ENCODE measurements at regions of chr21 and their contacts with region 1.

Region 1: DNA sequence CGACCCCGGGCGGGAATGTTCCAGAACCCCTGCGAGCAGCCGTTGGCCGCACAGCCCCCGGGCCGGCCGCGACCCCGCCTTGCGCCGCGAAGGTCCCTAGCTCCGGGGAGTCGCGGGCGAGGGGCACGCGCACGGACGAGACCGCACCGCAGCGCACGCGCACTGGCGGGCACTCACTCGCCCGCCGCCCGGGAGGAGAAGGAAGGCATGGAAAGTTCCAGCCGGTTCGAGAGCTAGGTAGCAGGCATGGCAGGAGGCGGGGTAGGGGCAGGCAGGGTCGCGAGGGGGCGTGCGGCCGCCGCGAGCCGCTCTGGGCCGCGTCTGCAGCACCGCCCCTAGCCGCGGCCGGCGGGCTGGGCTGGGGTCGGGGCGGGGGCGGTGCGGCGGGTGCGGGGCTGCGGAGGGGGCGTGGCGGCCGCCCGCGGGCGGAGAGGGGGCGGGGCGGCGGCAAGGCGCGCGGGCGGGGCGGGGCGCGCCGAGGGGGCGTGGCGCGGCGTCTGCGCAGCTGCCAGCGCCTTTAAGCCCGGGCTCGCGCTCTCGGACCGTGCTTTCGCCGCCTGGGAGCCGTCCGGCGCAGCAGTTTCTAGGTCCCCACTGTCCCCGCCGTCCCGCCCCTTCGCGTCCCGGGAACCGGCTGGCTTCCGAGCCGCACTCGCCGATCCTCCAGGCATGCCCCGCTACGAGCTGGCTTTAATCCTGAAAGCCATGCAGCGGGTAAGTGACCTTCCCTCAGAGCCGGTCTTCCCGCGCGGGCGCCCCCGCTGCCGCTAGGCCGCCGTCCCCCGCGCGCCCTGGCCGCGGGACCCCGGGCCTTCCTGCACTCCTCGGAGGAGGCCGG is at the starts of genes MRPS6 and SLC5A3:
- DNase-seq: peak; percentile 83
- ATAC-seq: peak; percentile 82
- H3K4me3 ChIP-seq: peak within 1 kb of the TSS; percentile 78
- H3K27ac ChIP-seq: no peak within 1 kb of the TSS
- H3K4me1 ChIP-seq: peaks cover 41% of the 10 kb centered on the region
- H3K27me3 ChIP-seq: no peaks in the 10 kb centered on the region
- CTCF ChIP-seq: no peak
- total RNA-seq, gene MRPS6: 32.8 and 35.0 TPM in 2 replicates
- total RNA-seq, gene SLC5A3: 13.4 and 13.8 TPM in 2 replicates

Region 2: DNA sequence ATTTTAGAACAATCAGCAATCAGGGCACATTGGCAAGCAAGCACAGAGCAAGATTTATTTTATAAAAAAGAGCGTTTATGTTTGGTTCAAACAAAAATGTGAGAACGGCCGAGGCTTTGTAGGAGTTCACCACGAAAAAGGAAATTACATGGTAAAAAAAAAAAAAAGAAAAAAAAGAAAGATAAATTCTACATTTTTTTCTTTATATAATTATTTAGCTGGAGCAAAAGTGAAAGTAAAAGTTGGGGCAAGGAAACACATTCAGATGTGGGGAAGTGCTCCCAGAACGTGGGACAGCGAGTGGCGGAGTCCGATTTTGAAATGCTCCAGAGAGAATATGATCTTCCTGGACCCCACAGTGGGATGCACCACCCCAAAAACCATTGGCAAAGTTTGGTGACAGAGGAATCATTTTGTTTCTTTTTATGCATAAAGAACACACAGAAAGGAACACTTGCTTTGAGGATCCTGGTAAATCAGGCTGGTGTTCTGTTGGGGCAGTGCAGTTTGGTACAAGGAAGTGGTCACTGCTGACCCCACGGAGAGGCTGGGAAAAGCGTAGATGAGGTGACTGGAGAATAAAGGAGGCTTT is 141.4 kb before region 1 on chr21:
- CTCF ChIA-PET with region 1: no interaction called
- POLR2A ChIA-PET with region 1: interaction called, 12 read pairs
- intact Hi-C with region 1: no loop called
- DNase-seq: peak; percentile 25
- ATAC-seq: peak; percentile 69
- H3K4me3 ChIP-seq: peak overlapping the region; percentile 88
- H3K27ac ChIP-seq: peak overlapping the region; percentile 86
- H3K4me1 ChIP-seq: peaks cover 13% of the 10 kb centered on the region
- H3K27me3 ChIP-seq: no peaks in the 10 kb centered on the region
- CTCF ChIP-seq: no peak

Region 3: DNA sequence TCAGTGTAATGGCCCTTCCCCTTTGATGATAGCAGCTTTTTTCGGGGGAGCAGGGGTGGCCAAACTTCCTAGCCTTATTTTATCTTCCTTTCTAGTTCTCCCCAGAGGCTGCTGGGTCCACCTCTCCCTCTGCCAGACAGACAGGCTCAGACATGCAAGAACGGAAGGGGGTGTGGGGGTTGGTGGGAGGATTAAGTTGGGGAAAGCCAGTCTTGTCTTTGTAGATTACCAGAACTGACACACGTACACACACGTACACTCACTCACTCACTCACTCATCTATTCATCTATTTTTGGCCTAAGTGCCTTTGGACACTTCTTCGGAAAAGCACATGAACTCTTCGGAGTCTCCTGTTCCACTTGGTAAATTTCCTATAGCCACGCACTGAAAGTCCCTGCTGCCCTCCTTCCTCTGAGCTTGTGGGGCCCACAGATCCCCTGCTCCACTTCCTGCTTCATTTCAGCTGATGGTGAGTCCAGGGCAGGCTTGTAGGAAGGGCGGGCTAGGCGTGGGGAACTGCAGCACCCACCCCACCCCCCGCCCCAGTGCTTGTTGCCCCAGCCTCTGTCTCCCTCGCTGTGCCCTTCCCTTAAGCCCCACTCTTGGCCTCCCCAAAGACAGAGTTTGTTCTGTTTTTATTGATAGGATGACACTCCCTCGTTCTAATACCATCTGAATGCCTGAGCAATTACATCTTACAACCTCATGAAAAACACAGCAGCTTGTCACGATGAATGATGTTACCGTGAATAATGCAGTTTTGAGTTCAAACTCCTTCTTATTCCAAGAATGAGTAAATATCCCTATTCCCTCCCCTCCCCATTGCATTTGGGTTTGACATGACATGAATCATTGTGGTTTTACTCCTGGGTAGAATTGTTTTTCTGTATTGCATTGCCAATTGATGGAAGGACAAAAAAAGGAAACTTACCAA is 96.9 kb before region 1 on chr21:
- CTCF ChIA-PET with region 1: no interaction called
- POLR2A ChIA-PET with region 1: no interaction called
- intact Hi-C with region 1: loop called (anchors 2 kb)
- DNase-seq: peak; percentile 98
- ATAC-seq: peak; percentile 76
- H3K4me3 ChIP-seq: peak overlapping the region; percentile 44
- H3K27ac ChIP-seq: peak overlapping the region; percentile 98
- H3K4me1 ChIP-seq: peaks cover 48% of the 10 kb centered on the region
- H3K27me3 ChIP-seq: no peaks in the 10 kb centered on the region
- CTCF ChIP-seq: no peak

Region 4: DNA sequence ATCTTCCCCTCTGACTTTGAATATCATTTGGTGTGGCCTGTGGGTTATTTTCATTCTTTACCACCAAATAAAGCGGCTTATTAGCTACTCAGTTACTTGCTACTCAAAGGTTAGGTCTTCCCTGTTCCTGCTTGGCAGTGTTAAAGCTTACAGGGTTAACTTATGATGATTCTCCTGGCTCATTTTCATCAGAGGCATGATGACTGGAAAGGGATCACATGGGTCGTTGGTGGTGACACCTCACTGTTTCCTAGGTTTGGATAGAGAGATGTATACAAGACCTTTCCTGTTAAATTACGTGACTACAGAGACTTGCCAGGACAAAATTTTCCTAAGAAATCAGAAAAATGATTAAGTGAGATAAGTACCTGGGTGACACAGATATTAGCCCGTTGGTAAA is 27.5 kb after region 1 on chr21:
- CTCF ChIA-PET with region 1: no interaction called
- POLR2A ChIA-PET with region 1: no interaction called
- intact Hi-C with region 1: no loop called
- DNase-seq: no peak
- ATAC-seq: peak; percentile 12; the same call in 1 of the 2 replicates
- H3K4me3 ChIP-seq: no peak overlapping the region
- H3K27ac ChIP-seq: no peak overlapping the region
- H3K4me1 ChIP-seq: no peaks in the 10 kb centered on the region
- H3K27me3 ChIP-seq: no peaks in the 10 kb centered on the region
- CTCF ChIP-seq: no peak

Region 5: DNA sequence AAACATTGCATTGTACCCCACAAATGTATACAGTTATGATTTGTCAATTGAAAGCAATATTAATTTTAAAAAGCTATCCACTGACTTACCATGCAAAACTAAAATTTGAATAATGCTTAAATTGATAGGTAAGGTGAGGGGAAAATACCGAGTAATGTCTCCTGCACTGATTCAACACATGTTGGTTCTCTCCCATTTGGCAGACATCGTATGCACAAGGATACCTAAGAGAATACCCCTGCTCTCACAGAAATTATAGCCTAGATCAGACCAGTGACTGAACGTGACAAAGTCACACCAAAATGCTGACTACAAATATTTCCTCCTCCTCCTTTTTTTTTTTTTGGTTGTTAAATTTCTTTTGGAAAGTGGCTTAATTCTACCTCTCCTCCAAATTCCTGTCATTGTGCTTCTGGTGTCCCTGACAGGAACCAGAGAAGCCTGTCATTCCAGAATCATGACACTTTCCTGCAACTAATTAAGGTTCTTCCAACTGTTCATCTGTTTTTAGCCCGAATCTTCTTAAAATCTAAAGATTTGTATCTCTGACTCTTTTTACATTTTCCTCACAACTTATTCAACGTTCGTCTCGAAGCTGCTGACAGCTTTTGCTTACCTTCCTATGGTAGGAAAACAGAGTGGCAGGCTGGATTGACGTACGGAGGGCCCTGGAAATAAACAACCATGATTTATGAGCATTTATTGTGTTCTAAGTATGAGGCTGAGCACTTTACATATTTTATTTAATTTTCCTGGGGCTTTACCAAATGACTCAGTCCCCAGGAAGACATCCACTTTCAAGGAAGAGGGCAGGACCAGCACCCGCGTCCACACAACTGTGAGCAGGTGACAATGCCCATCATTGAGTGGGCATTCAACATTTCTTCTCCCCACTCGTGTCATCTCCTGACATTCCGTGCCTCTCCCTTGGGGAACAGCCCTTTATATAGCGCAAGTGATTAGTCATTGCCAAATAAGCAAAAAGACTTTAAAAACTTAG is 232.7 kb after region 1 on chr21:
- CTCF ChIA-PET with region 1: no interaction called
- POLR2A ChIA-PET with region 1: interaction called, 13 read pairs
- intact Hi-C with region 1: no loop called
- DNase-seq: no peak
- ATAC-seq: no peak
- H3K4me3 ChIP-seq: no peak overlapping the region
- H3K27ac ChIP-seq: no peak overlapping the region
- H3K4me1 ChIP-seq: no peaks in the 10 kb centered on the region
- H3K27me3 ChIP-seq: peaks cover 21% of the 10 kb centered on the region; the same call in 1 of the 2 replicates
- CTCF ChIP-seq: no peak

Measured in PC-3 (cell line).